ENCODE measurements at regions of chr19 and their contacts with region 1.

Region 1: DNA sequence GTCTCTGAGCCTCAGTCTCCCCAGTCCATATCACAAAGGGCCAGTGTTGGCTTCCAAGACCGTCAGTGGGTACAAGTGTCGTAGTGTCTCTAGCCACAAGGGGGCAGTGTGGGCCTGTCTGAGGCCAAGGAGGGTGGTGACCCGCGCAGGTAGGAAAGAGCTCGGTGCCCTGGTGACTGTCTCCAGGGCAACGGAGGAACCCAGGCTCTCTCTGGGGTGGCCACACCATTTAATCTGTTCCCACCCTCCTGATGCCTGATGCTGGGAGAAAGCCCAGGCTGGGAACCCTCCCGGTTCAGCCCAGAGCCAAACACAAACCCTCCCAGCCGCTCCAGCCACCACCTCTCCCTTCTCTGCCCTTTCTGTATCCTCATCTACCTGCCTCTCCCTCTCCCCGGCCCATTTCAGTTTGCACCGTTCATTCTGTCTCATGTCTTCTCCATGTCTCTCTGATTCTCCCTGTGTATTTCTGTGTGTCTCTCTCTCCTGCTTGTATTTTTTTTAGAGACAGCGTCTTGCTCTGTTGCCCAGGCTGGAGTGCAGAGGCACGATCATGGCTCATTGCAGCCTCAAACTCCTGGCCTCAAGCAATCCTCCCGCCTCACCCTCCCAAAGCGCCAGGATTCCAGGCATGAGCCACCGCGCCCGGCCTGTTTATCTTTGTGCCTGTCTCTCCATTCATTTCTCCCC is 17.5 kb upstream of the MEIS3 start:
- DNase-seq: peak; percentile 87

Region 2: GRCh38 chr19:47514869-47515588 is 78.2 kb after region 1 on chr19 and contains the start of gene NAPA:
- intact Hi-C with region 1: loop called in 1 of 2 experiments (anchors 1 kb)
- DNase-seq: peak; percentile 100
- total RNA-seq, gene NAPA: 75.8 to 83.8 TPM

Region 3: GRCh38 chr19:47540728-47541127 is 103.9 kb after region 1 on chr19:
- intact Hi-C with region 1: no loop called
- DNase-seq: no peak

Region 4: GRCh38 chr19:47697863-47698609 is 261.2 kb after region 1 on chr19:
- intact Hi-C with region 1: loop called (anchors 2 to 5 kb)
- DNase-seq: peak; percentile 92

Region 5: DNA sequence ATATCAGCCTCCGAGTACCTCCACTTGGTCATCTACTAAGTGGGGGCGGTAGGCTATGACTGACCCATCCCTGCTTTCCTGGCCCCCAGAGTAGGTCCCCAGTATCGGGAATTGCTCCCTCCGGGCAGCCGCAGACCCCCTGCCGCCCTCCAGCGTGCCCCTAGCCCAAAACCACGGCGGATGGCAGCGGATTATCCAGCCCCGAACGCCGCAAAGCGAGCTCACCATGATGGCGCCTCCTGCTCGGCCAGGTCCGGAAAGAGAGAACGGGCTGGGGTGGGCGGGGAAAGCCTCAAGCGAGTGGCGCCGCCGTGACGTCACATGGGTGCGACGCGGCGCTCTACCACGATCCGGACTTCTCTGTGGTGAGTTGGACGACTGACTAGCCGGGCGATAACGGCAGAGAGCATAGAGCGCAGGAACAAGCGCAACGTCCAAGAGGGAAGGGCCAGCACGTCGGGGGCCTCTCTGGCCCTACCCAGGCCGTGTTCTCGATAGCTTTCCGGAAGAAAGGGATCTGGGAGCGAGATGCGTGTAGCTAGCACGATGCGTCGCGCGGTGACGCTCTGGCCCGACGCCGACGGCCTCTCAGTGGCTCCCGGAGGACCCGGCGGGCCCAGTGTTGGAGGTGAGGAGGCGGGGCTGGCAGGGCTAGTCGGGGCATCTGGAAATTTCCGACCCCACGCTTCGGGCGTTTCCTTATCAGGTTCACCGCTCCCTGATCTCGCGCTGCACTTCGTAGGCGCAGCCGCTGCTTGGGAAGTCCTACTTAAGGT is 1182.2 kb after region 1 on chr19 and contains the starts of genes RPL18 and SPHK2:
- intact Hi-C with region 1: no loop called
- DNase-seq: peak; percentile 99
- total RNA-seq, gene RPL18: 746 to 777 TPM
- total RNA-seq, gene SPHK2: 8.5 to 12.1 TPM

Measured in posterior vena cava (tissue), 2 donors.